ENCODE measurements at regions of chr7 and their contacts with region 1.

Region 1: GRCh38 chr7:47247132-47247531 is 334.8 kb downstream of the TNS3 start:
- DNase-seq: no peak
- ATAC-seq: no peak
- H3K4me3 ChIP-seq: no peak overlapping the region
- H3K27ac ChIP-seq: peak overlapping the region in 1 of 4 donors; percentile 40
- H3K4me1 ChIP-seq: peaks cover 0 to 30% of the 10 kb centered on the region in 2 donors
- H3K27me3 ChIP-seq: no peaks in the 10 kb centered on the region
- CTCF ChIP-seq: no peak
- POLR2A ChIP-seq: no peak

Region 2: DNA sequence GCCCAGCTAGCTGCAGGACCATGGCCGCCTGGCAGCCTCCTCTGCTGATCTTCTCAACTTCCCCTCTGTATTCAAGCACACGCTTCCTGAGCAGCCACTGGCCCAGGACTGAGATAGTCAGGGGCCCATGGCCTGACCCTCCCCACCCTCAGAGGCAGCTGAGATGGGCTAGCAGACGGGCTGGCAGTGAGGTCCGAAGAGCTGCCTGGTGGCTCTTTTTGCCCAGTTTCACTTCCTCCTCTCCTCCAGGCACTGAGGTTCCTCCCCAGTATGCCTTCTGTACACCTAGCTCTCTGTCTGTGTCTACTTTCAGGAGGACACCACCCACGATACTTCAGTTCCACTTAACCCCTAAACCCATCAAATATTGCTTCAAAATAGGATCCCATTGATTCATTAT is 60.8 kb before region 1 on chr7:
- in situ Hi-C with region 1: loop called in 1 of 4 experiments (anchors 5 kb)
- intact Hi-C with region 1: no loop called
- DNase-seq: no peak
- ATAC-seq: no peak
- H3K4me3 ChIP-seq: no peak overlapping the region
- H3K27ac ChIP-seq: no peak overlapping the region
- H3K4me1 ChIP-seq: peaks cover 33 to 41% of the 10 kb centered on the region in 2 donors
- H3K27me3 ChIP-seq: no peaks in the 10 kb centered on the region
- CTCF ChIP-seq: no peak
- POLR2A ChIP-seq: no peak

Measured in gastrocnemius medialis (tissue), 4 donors.